Adrenal gland (tissue), 19 donors: ENCODE measurements at regions of chr12 and their contacts with region 1.

Region 1: DNA sequence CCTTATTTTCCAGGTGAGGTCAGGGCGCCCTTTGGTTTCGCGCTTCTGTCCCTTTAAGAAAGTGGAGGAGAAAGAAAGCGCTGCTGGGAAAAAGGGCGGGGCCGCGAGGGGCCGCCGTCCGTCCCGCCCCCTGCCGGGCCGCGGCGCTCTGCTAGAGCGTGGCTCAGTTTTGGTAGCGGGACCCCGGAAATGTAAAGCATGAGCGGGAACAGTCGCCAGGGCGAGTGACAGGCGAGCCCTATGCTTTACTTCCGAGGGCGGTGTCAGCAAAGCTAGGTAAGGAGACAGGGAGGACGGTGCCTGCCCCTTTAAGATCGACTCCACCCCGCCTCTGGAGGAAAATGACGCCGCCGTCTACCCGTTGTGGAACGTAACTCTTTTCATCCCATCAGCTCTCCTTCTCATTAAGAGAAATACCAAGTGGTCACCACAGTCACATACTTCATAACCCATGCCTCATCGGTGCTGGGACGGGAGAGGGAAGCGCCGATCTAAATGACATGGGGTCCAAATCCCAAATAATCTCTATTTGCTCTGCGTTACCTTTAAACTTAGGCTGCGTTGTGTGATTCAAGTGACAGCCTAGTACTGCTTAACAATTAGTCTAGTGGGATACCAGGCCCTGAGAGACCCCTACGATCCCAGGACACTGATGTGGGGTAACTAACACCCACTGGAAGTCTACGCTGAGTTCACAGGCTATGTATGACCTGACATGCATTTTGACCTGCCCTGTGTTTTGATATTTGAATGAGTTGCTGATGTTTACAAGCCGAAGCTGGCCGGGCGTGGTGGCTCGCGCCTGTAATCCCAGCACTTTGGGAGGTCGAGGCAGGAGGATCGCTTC is at the start of gene ETFBKMT:
- DNase-seq: peak; percentile 84 to 96 (median 92)
- H3K4me3 ChIP-seq: peak within 1 kb of the TSS; percentile 18 to 92 (median 68)
- H3K27ac ChIP-seq: peak within 1 kb of the TSS; percentile 70 to 98 (median 94)
- H3K4me1 ChIP-seq: peaks cover 10 to 12% of the 10 kb centered on the region in 2 donors
- H3K27me3 ChIP-seq: no peaks in the 10 kb centered on the region
- CTCF ChIP-seq: peak; percentile 24 to 66 (median 48)
- POLR2A ChIP-seq: peak; percentile 30 to 91
- total RNA-seq, gene ETFBKMT: 2.0 to 11.1 (median 7.8) TPM

Region 2: DNA sequence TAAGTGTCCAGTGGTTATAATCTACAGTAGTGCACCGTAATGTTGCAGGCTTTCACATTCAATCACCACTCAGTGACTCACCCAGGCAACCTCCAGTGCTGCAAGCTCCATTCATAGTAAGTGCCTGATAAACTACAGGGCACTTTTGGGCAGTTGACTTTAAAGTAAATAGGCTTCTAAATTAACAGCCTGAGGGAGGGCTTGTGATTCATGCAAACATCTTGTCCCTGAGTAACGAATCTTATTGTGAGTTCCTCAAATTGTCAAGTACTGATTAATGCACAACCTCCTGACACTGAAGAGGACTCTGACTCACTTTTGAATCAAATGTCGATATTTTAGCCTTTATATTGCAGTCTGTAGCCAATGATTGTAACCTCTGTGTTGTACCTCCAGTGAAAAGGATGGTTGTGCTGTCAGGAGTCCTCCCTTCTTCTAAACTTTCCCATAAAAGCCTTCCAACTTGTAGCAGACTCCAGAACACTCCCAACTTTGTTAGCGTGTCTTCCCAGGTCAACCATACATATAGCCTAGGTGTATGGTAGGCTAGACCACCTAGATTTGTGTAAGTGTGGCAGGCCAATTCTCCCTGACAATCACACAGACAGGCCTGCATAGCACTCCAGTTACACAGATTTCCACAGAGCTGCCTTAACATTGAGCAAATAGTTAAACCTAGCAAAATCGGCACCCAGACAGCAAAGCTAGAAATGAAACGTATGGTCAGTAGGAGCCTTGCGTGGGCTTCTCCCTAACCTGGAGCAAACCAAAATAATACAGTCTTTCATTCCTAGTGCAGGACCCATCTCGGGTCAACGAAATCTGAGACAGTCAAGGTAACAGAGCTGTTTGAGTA is 392.5 kb after region 1 on chr12:
- intact Hi-C with region 1: loop called in 1 of 2 experiments (anchors 10 kb)
- DNase-seq: peak; percentile 20 to 57 (median 31)
- H3K4me3 ChIP-seq: no peak overlapping the region
- H3K27ac ChIP-seq: no peak overlapping the region
- H3K4me1 ChIP-seq: no peaks in the 10 kb centered on the region
- H3K27me3 ChIP-seq: no peaks in the 10 kb centered on the region
- CTCF ChIP-seq: no peak
- POLR2A ChIP-seq: no peak

Region 3: GRCh38 chr12:32302218-32303173 is 643.2 kb after region 1 on chr12:
- intact Hi-C with region 1: loop called in 1 of 2 experiments (anchors 10 kb)
- DNase-seq: no peak
- H3K4me3 ChIP-seq: no peak overlapping the region
- H3K27ac ChIP-seq: no peak overlapping the region
- H3K4me1 ChIP-seq: no peaks in the 10 kb centered on the region
- H3K27me3 ChIP-seq: no peaks in the 10 kb centered on the region
- CTCF ChIP-seq: peak in 4 of 6 experiments; percentile 16 to 49 (median 35)
- POLR2A ChIP-seq: no peak

Region 4: DNA sequence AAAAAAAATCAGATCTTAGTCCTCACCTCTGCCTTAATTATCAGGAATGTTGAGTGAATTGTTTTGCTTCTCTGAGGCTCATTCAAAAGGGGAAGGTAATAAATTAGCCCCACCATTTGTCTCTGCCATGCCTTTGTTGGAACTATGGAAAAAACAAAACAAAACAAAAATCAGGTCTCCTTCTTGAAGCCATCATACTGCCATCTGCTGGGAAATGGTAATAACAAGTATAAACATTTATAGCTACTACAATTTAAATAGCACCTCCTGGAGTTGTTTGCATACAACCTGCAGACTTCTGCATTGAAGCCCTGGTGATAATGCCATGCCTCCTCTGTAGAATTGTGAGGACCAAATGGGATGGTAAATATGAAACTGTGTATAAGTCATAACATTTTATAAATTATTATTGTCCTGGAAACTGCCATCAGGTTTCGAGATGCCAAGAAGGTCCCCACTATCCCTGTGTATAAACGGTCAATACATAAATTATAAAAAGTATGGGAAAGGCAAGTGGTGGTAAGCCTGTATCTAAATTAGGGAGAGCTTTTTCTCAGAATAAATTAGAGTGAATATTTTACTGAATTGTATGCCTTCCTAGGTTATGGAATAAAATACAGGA is 652.9 kb after region 1 on chr12:
- intact Hi-C with region 1: loop called (anchors 10 kb)
- DNase-seq: no peak
- H3K4me3 ChIP-seq: no peak overlapping the region
- H3K27ac ChIP-seq: no peak overlapping the region
- H3K4me1 ChIP-seq: no peaks in the 10 kb centered on the region
- H3K27me3 ChIP-seq: no peaks in the 10 kb centered on the region
- CTCF ChIP-seq: peak; percentile 33 to 74 (median 58)
- POLR2A ChIP-seq: no peak